Activated CD4-positive, alpha-beta memory T cell treated with anti-CD3 and anti-CD28 coated beads for 36 hours (primary cell): ENCODE measurements at regions of chr21 and their contacts with region 1.

Region 1: DNA sequence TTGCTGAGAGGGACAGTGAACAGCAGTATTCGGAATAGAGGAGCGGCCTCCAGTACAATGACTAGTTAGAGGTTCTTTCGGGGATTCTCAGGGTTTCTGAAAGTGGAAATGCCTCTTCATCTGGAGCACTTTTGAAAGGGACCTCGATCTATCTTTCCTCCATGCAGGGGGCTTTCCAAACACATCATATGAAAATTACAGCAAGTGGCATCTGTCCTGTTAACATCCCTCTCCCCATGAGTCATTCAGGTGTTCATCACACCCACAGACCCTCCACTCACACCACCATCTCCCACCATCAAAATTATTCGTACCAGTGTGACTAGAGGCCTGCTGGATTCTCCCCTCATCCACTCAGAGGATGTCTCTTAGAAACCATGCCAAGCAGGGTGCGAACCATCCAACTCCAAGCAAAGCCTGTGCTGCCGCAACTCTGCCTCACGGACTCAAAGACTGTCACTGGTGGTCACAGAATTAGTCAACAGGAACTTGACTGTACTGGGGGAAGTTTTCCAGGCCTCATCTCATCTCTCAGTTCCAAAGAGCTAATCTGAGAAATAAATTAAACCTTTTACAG is 211.1 kb downstream of the MRPL39 start:
- DNase-seq: peak; percentile 89
- H3K4me3 Mint-ChIP-seq: peak overlapping the region; percentile 24
- H3K27ac Mint-ChIP-seq: peak overlapping the region; percentile 77
- H3K4me1 Mint-ChIP-seq: peaks cover 15% of the 10 kb centered on the region
- H3K27me3 Mint-ChIP-seq: no peaks in the 10 kb centered on the region

Region 2: GRCh38 chr21:25342816-25343215 is 53.4 kb before region 1 on chr21:
- CTCF ChIA-PET with region 1: no interaction called
- POLR2A ChIA-PET with region 1: no interaction called
- intact Hi-C with region 1: no loop called
- DNase-seq: no peak
- H3K4me3 Mint-ChIP-seq: no peak overlapping the region
- H3K27ac Mint-ChIP-seq: no peak overlapping the region
- H3K4me1 Mint-ChIP-seq: no peaks in the 10 kb centered on the region
- H3K27me3 Mint-ChIP-seq: peaks cover 2% of the 10 kb centered on the region

Region 3: GRCh38 chr21:25370311-25370744 is 25.9 kb before region 1 on chr21:
- CTCF ChIA-PET with region 1: no interaction called
- POLR2A ChIA-PET with region 1: no interaction called
- intact Hi-C with region 1: loop called (anchors 1 kb)
- DNase-seq: peak; percentile 58
- H3K4me3 Mint-ChIP-seq: no peak overlapping the region
- H3K27ac Mint-ChIP-seq: no peak overlapping the region
- H3K4me1 Mint-ChIP-seq: peaks cover 12% of the 10 kb centered on the region
- H3K27me3 Mint-ChIP-seq: peaks cover 6% of the 10 kb centered on the region

Region 4: DNA sequence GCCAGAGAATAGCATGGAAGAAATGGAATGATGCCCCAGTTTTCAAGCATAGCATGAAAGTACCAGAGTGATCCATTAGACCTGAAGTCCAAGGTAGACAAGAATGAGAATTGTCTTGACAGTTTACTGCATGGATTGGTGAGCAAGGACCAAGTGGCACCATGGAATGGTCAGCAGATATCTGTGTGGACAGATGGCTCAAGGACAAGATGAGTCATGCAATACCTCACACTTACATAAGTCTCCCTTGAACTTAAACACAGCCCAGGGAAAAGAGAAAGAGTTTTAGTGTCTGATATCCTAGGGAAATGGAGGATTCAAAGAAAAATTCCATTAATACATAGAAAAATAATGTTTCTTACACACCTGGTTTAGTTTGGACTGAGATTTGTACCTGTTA is 15.9 kb after region 1 on chr21:
- CTCF ChIA-PET with region 1: no interaction called
- POLR2A ChIA-PET with region 1: no interaction called
- intact Hi-C with region 1: no loop called
- DNase-seq: no peak
- H3K4me3 Mint-ChIP-seq: no peak overlapping the region
- H3K27ac Mint-ChIP-seq: no peak overlapping the region
- H3K4me1 Mint-ChIP-seq: peaks cover 3% of the 10 kb centered on the region
- H3K27me3 Mint-ChIP-seq: peaks cover 2% of the 10 kb centered on the region

Region 5: DNA sequence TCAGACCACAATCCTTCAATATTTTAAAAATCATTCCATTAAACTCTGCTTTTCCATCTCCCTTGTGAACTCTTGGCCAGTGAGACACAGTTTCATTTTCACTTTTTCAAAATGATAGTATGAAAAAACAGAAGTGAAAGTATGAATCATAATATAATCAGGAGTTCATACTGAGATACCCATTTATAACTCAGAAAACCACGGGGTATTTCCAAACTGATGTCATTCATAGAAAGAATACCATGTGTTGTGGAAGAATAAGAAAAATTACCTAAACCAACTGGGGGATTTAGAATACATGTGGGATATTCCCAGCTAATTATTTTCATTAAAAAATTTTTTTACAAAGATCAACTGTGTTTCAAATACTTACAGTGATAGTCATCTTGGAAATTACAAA is 61.2 kb after region 1 on chr21:
- CTCF ChIA-PET with region 1: no interaction called
- POLR2A ChIA-PET with region 1: interaction called, 4 read pairs
- intact Hi-C with region 1: loop called (anchors 1 kb)
- DNase-seq: no peak
- H3K4me3 Mint-ChIP-seq: peak overlapping the region; percentile 68
- H3K27ac Mint-ChIP-seq: peak overlapping the region; percentile 93
- H3K4me1 Mint-ChIP-seq: peaks cover 77% of the 10 kb centered on the region
- H3K27me3 Mint-ChIP-seq: no peaks in the 10 kb centered on the region

Region 6: DNA sequence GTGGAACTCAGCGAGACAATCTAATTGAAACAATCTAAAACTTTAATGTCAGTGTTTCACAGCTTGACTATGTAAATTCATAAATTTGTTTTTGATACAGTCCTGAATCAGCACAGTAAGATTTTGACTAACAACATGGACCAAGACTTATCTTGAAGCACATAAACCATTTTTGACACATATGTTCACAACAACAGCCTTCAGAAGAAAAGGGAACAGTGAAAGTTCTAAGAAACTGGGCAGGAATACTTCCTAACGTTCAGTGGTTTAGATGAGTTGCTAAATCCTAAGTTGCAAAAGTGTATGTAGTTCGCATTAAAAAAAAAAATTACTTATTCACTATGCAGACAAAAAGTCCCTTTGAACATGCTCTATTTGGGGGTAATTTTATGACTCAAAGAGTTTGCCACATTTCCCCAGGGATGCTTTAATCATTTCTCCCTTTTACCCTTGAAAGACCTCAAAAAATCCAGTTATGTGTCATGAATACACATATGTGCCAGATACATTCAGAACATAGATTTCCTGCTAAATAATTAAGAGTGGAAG is 90.9 kb after region 1 on chr21:
- CTCF ChIA-PET with region 1: no interaction called
- POLR2A ChIA-PET with region 1: interaction called, 3 read pairs
- intact Hi-C with region 1: loop called (anchors 1 kb)
- DNase-seq: no peak
- H3K4me3 Mint-ChIP-seq: peak overlapping the region; percentile 58
- H3K27ac Mint-ChIP-seq: peak overlapping the region; percentile 87
- H3K4me1 Mint-ChIP-seq: peaks cover 76% of the 10 kb centered on the region
- H3K27me3 Mint-ChIP-seq: no peaks in the 10 kb centered on the region

Region 7: GRCh38 chr21:25507522-25507921 is 111.3 kb after region 1 on chr21:
- CTCF ChIA-PET with region 1: no interaction called
- POLR2A ChIA-PET with region 1: no interaction called
- intact Hi-C with region 1: loop called (anchors 1 kb)
- DNase-seq: no peak
- H3K4me3 Mint-ChIP-seq: peak overlapping the region; percentile 24
- H3K27ac Mint-ChIP-seq: peak overlapping the region; percentile 85
- H3K4me1 Mint-ChIP-seq: peaks cover 55% of the 10 kb centered on the region
- H3K27me3 Mint-ChIP-seq: no peaks in the 10 kb centered on the region

Region 8: GRCh38 chr21:25607151-25608043 is 211.2 kb after region 1 on chr21 and contains the start of gene MRPL39:
- CTCF ChIA-PET with region 1: interaction called, 3 read pairs
- POLR2A ChIA-PET with region 1: no interaction called
- intact Hi-C with region 1: loop called (anchors 1 kb)
- DNase-seq: peak; percentile 93
- H3K4me3 Mint-ChIP-seq: peak within 1 kb of the TSS; percentile 97
- H3K27ac Mint-ChIP-seq: peak within 1 kb of the TSS; percentile 91
- H3K4me1 Mint-ChIP-seq: peaks cover 41% of the 10 kb centered on the region
- H3K27me3 Mint-ChIP-seq: no peaks in the 10 kb centered on the region
- total RNA-seq, gene MRPL39: 71.7 to 73.6 TPM

Region 9: GRCh38 chr21:25845729-25846256 is 449.6 kb after region 1 on chr21:
- CTCF ChIA-PET with region 1: no interaction called
- POLR2A ChIA-PET with region 1: no interaction called
- intact Hi-C with region 1: loop called (anchors 1 kb)
- DNase-seq: no peak
- H3K4me3 Mint-ChIP-seq: no peak overlapping the region
- H3K27ac Mint-ChIP-seq: peak overlapping the region; percentile 60
- H3K4me1 Mint-ChIP-seq: peaks cover 14% of the 10 kb centered on the region
- H3K27me3 Mint-ChIP-seq: peaks cover 22% of the 10 kb centered on the region